ENCODE measurements at regions of chr4 and their contacts with region 1.

Region 1: DNA sequence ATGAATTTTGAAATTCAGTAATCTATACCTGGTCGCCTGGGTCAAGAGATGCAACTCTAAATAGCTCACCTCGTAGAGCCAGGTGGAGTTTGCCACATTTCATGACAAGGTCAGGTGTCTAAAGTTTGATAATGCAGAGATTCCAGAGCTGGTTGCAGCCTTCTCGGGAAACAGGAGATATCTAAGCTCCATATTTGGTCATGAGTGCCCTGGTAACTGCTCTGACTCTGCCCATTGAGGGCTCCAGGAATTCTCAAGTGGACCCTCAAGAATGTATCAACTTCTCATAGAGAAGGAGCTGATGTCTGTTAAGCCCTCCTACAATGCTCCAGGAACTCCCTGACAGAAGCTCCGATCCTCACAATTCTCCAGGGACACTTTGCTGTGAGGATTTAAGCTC is 33.2 kb upstream of the TSPAN5 start:
- DNase-seq: no peak
- H3K4me3 ChIP-seq: no peak overlapping the region
- H3K27ac ChIP-seq: no peak overlapping the region
- H3K4me1 ChIP-seq: no peaks in the 10 kb centered on the region
- H3K27me3 ChIP-seq: no peaks in the 10 kb centered on the region
- CTCF ChIP-seq: no peak
- EP300 ChIP-seq: no peak
- POLR2A ChIP-seq: no peak

Region 2: DNA sequence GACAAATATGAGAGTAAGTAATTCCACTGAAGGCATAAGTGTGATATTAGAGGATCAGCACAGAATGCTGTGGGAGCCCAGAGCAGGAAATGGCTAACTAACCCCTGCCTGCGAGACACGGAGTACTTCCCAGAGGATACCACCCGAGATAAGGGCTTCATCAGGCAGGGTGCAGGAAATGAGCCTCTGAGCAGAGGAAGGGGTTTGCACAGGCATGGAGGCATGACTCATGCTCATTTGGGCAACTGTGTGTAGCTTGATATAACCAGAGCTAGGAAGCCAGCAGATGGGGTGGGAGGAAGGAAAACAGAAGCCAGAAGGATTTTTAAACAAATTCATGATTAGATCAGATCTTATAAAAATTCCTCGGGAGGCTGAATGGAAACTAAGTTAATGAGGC is 36.8 kb after region 1 on chr4:
- in situ Hi-C with region 1: no loop called
- intact Hi-C with region 1: loop called (anchors 1 kb)
- DNase-seq: no peak
- H3K4me3 ChIP-seq: no peak overlapping the region
- H3K27ac ChIP-seq: no peak overlapping the region
- H3K4me1 ChIP-seq: no peaks in the 10 kb centered on the region
- H3K27me3 ChIP-seq: no peaks in the 10 kb centered on the region
- CTCF ChIP-seq: no peak
- EP300 ChIP-seq: no peak
- POLR2A ChIP-seq: no peak

Region 3: DNA sequence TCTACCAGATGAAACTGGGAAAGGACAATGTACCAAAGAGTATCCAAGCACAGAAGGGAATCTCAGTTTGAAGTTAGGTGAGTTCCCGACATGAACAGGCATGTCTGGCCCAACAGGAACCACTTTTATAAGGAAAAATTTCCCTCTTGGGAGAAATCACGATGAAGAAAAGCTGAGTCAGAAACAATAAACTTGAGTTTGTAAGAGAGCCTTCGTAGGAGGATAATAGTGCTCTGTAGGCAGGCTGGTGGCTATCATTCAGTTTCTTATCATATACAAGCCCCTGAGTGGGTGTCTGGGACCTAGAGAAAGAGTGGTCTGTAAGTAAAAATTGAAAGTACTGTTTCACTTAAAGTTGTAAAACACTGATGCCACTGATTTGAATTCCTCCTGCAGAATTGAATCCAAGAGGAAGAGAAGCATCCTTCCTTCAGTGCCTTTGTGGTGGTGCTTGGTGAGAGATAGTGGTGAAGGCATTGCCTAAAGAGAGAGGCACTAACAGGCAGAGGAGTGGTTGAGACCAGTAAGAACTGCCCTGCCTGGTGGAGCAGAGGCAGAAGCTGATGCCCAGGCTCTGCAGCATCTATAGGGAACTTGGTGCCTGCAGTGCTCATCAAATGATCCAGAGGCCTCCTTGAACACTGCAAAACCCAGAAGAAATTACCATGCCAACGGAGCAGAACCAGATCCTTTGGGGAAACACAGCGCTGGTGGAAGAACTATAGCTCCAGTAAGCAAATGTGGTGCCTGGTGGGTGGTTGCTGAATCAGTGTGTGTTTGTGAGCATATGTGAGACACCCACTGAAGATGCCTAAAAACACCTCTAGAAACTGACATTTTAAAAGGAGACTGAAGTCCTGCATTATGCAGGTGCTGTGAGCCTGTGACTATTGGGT is 272.2 kb after region 1 on chr4:
- in situ Hi-C with region 1: no loop called
- intact Hi-C with region 1: no loop called
- DNase-seq: no peak
- H3K4me3 ChIP-seq: no peak overlapping the region
- H3K27ac ChIP-seq: no peak overlapping the region
- H3K4me1 ChIP-seq: no peaks in the 10 kb centered on the region
- H3K27me3 ChIP-seq: no peaks in the 10 kb centered on the region
- CTCF ChIP-seq: no peak
- EP300 ChIP-seq: no peak
- POLR2A ChIP-seq: no peak

Region 4: DNA sequence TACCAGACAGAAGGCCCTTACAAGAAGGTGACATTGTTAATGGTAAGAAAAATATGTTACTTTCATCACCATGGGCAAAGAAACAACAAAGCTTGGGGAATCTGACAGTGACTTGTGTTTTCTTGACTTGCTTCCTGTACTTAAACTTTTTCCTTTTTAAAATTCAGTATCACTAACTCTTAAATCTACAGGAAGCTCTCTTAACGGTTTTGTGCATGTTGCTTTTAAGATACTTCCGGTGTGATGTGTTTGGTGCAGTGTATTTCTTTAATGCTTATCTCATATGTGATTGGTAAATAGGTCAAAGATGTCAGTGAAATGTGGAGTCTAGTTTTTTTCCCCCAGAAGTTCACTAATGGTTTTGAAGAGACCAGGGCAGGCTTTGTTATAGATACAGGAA is 351.8 kb after region 1 on chr4:
- in situ Hi-C with region 1: no loop called
- intact Hi-C with region 1: no loop called
- DNase-seq: no peak
- H3K4me3 ChIP-seq: no peak overlapping the region
- H3K27ac ChIP-seq: no peak overlapping the region
- H3K4me1 ChIP-seq: no peaks in the 10 kb centered on the region
- H3K27me3 ChIP-seq: no peaks in the 10 kb centered on the region
- CTCF ChIP-seq: no peak
- EP300 ChIP-seq: no peak
- POLR2A ChIP-seq: no peak